ENCODE measurements at regions of chr12 and their contacts with region 1.

Region 1: DNA sequence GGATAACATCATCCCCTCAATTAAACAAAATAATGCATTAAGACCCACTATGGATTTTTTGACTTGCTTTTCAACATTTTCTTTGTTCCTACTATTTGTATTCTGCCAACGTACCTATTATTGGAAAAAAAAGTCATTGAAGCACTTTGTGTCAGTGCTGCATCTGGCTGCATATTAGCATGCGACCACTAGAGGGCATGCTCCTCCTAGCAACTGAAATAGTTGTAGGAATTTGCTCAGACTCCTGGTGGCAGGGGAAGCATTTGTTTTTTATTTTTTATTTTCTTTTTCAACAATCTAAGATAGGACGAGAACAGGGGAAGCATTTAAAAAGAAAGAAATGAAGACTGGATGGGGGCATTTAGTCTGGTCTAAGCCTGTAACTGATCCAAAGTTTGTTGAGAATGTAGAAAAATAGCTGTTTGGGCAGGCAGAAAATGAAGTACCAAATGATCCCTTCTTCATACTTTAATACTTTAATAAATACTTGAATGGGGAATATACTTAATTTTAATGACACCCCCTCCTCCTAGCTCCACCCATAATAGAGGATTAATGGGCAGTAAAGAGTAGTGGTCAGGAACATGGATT is 14.5 kb upstream of the CLEC4A start:
- DNase-seq: peak; percentile 79
- ATAC-seq: peak; percentile 97
- H3K4me3 ChIP-seq: no peak overlapping the region
- H3K27ac ChIP-seq: no peak overlapping the region
- H3K4me1 ChIP-seq: no peaks in the 10 kb centered on the region
- H3K27me3 ChIP-seq: no peaks in the 10 kb centered on the region
- CTCF ChIP-seq: peak; percentile 99
- POLR2A ChIP-seq: peak; percentile 60; the same call in 1 of the 2 replicates
- RAD21 ChIP-seq: peak; percentile 99

Region 2: DNA sequence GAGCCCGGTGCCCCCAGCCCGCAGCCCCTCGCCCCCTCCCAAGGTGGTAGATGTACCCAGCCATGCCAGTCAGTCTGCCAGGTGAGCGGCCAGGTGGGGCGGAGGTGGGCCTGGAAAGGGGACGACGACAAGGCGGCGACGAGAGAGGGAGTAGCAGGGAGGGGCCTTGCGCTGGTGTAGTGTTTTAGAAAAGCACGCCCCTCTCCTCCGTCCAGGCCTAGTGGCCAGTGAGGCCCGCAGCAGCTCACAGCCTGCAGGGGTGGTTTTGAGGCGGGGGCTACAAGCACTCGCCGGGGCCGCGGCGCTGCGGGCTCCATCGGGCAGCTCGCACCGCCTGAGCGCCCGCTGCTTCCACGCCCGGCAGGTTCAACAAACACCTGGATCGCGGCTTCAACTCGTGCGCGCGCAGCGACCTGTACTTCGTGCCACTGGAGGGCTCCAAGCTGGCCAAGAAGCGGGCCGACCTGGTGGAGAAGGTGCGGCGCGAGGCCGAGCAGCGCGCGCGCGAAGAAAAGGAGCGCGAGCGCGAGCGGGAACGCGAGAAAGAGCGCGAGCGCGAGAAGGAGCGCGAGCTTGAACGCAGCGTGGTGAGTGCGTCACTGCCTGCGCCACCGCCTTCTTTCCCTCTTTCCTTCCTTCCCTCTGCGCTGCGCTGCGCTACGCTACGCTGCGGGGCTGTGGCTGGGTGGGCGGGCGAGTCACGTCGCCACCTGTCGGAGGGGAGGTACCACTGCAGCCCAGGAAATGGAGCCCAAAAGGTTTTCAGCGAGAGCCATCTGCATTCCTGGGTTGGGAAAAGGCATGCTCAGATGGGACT is 1171.2 kb before region 1 on chr12:
- CTCF ChIA-PET with region 1: no interaction called
- POLR2A ChIA-PET with region 1: no interaction called
- dilution Hi-C with region 1: no loop called
- in situ Hi-C with region 1: no loop called
- intact Hi-C with region 1: no loop called
- DNase-seq: peak; percentile 92
- ATAC-seq: peak; percentile 89
- H3K4me3 ChIP-seq: peak overlapping the region; percentile 46
- H3K27ac ChIP-seq: peak overlapping the region; percentile 69
- H3K4me1 ChIP-seq: peaks cover 9% of the 10 kb centered on the region
- H3K27me3 ChIP-seq: no peaks in the 10 kb centered on the region
- CTCF ChIP-seq: peak; percentile 96
- POLR2A ChIP-seq: peak; percentile 35; the same call in 1 of the 2 replicates
- RAD21 ChIP-seq: peak; percentile 62

Region 3: GRCh38 chr12:8226355-8226754 is 117.5 kb after region 1 on chr12:
- CTCF ChIA-PET with region 1: interaction called, 3 read pairs
- POLR2A ChIA-PET with region 1: no interaction called
- dilution Hi-C with region 1: no loop called
- in situ Hi-C with region 1: loop called (anchors 10 kb)
- intact Hi-C with region 1: no loop called
- DNase-seq: no peak
- ATAC-seq: no peak
- H3K4me3 ChIP-seq: no peak overlapping the region
- H3K27ac ChIP-seq: no peak overlapping the region
- H3K4me1 ChIP-seq: no peaks in the 10 kb centered on the region; the same call in 1 of the 2 replicates
- H3K27me3 ChIP-seq: no peaks in the 10 kb centered on the region
- CTCF ChIP-seq: no peak
- POLR2A ChIP-seq: no peak
- RAD21 ChIP-seq: no peak